Right ventricle myocardium inferior (tissue), 1 donor: ENCODE measurements at regions of chr19 and their contacts with region 1.

Region 1: DNA sequence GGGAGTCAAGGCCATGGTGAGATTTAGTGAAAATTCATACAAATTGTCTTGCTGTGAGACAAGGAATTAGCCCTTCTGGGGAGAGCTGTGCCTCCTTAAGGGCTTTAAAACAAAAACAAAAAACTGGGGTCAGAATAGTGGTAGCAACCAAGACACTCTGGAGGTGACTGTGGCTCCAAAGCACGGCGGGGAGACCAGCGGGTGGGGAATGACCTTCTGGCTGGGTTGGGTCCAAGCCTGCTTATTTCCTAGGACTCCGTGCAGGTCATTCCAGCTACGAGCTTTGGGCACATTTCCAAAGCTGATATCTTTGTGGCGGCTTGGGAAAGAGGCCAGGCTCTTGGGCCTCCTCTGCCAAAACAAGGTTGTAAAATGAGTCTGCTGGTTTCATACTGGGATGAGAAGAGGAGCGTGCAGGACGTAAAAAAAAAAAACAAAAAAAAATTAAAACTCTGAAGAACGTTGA is 348.3 kb downstream of the UQCRFS1 start:
- DNase-seq: no peak
- ATAC-seq: peak; percentile 87

Region 2: GRCh38 chr19:28710278-28710677 is 154.3 kb before region 1 on chr19:
- intact Hi-C with region 1: no loop called
- DNase-seq: no peak
- ATAC-seq: no peak

Region 3: DNA sequence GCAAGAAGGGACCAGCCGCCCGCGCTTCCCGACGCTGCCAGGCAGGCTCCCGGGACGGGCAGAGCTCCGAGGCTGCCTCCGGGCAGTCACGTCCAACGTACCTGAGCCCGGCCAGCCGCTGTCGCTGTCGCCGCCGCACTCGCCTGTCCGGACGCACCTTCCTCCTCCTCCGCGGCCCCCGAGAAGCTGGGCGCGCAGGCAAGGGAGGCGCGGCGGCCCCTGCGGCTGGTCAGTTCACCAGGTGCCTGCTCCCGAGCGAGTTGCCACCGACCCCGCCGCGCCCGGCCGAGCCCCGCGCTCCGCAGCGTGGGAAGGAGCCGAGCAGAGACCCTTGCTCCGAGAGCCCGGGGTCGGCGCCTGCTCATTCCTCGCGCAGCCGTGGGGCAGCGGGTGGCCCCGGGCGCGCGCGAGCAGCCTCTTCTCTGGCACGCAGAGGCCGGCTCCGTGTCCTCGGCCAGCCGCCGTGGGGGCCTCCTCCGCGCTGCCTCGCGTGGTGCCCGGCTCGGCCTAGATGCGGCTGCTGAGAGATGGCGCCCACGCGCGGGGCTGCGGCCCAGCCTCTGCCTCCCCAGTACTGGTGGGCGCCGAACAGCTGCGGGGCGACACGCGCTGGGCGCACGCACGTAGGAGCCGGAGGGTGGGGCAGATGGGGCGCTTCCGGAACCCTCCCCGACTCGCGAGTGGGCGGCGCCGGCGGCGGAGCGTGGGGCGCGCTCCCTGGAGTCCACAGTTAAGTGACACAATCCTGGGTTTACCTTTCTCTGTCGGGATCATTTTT is 71.0 kb before region 1 on chr19:
- intact Hi-C with region 1: loop called (anchors 5 kb)
- DNase-seq: no peak
- ATAC-seq: peak; percentile 89

Region 4: GRCh38 chr19:28905996-28906395 is 41.4 kb after region 1 on chr19:
- intact Hi-C with region 1: no loop called
- DNase-seq: no peak
- ATAC-seq: no peak